ENCODE measurements at regions of chr1 and their contacts with region 1.

Region 1: GRCh38 chr1:111399792-111400610 is 27.5 kb downstream of the OVGP1 start:
- DNase-seq: no peak
- H3K4me3 ChIP-seq: no peak overlapping the region
- CTCF ChIP-seq: peak; percentile 54

Region 2: DNA sequence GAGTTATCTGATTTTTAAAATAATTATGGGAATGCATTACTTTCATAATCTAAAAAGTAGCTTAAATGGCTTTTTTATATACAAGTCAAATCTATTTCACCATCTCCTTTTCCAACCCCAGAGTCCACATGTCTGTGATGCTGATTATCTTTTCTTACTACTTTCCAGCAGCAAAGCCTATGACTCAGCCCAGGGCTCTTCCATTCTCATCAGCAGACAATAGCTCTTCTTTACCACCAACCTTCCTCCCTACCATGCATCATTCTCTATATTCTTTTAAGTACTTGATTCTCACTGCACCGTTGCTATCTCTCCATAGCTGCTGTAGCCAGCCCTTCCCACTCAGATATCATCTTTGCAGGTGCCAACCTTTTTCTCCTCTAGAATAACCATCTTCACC is 33.7 kb before region 1 on chr1:
- CTCF ChIA-PET with region 1: interaction called, 10 read pairs
- POLR2A ChIA-PET with region 1: no interaction called
- DNase-seq: no peak
- H3K4me3 ChIP-seq: no peak overlapping the region
- CTCF ChIP-seq: no peak

Region 3: DNA sequence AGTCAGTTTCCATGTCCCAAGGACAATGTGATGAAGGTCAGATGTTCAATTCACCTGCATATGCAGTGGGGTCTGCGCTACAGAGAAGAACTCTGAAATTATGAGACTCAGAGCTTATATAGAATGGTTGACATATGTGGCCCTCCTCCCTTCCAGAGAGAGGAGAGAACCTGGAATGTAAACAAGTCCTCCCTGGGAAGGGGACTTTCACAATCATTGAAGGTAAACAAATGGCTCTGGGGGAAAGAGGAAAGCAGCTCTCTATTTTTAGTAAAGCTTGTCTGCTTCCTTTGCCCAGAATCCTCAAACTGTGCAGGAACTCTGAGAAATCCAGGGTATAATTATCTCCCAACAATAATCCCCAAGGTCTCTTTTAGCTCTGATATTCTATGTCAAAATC is 17.8 kb after region 1 on chr1:
- CTCF ChIA-PET with region 1: interaction called, 20 read pairs
- POLR2A ChIA-PET with region 1: no interaction called
- DNase-seq: no peak
- H3K4me3 ChIP-seq: no peak overlapping the region
- CTCF ChIP-seq: no peak

Measured in AG04449 (cell line).